ENCODE measurements at regions of chr16 and their contacts with region 1.

Region 1: GRCh38 chr16:6932871-6933390 is 399.7 kb upstream of the RBFOX1 start:
- DNase-seq: no peak
- H3K4me3 ChIP-seq: no peak overlapping the region
- H3K27ac ChIP-seq: no peak overlapping the region
- H3K27me3 ChIP-seq: no peaks in the 10 kb centered on the region
- CTCF ChIP-seq: no peak

Region 2: GRCh38 chr16:6873515-6873914 is 59.4 kb before region 1 on chr16:
- intact Hi-C with region 1: loop called in 1 of 2 experiments (anchors 10 kb)
- DNase-seq: no peak
- H3K4me3 ChIP-seq: no peak overlapping the region
- H3K27ac ChIP-seq: no peak overlapping the region
- H3K27me3 ChIP-seq: peaks cover 0 to 3% (median 0%) of the 10 kb centered on the region in 45 donors
- CTCF ChIP-seq: no peak